Natural killer cell (primary cell): ENCODE measurements at regions of chr2 and their contacts with region 1.

Region 1: GRCh38 chr2:157497638-157498314 is 53.9 kb upstream of the CYTIP start:
- DNase-seq: peak in 1 of 2 donors; percentile 67
- ATAC-seq: peak; percentile 84 to 88 (median 87)
- H3K4me3 ChIP-seq: no peak overlapping the region
- H3K4me3 Mint-ChIP-seq: no peak overlapping the region
- H3K27ac ChIP-seq: no peak overlapping the region
- H3K27ac Mint-ChIP-seq: no peak overlapping the region
- H3K4me1 ChIP-seq: no peaks in the 10 kb centered on the region
- H3K4me1 Mint-ChIP-seq: peaks cover 11 to 23% of the 10 kb centered on the region in 2 donors
- H3K27me3 ChIP-seq: no peaks in the 10 kb centered on the region
- H3K27me3 Mint-ChIP-seq: no peaks in the 10 kb centered on the region
- CTCF ChIP-seq: peak; percentile 68

Region 2: GRCh38 chr2:157460384-157460837 is 37.4 kb before region 1 on chr2:
- intact Hi-C with region 1: no loop called
- DNase-seq: no peak
- ATAC-seq: no peak
- H3K4me3 ChIP-seq: no peak overlapping the region
- H3K4me3 Mint-ChIP-seq: no peak overlapping the region
- H3K27ac ChIP-seq: no peak overlapping the region
- H3K27ac Mint-ChIP-seq: no peak overlapping the region
- H3K4me1 ChIP-seq: peaks cover 17% of the 10 kb centered on the region
- H3K4me1 Mint-ChIP-seq: peaks cover 7% of the 10 kb centered on the region in 2 donors
- H3K27me3 ChIP-seq: no peaks in the 10 kb centered on the region
- H3K27me3 Mint-ChIP-seq: peaks cover 2 to 3% of the 10 kb centered on the region in 2 donors
- CTCF ChIP-seq: no peak

Region 3: GRCh38 chr2:157596992-157597681 is 99.4 kb after region 1 on chr2:
- intact Hi-C with region 1: loop called (anchors 1 kb)
- DNase-seq: peak; percentile 27 to 70
- ATAC-seq: peak; percentile 64 to 78 (median 72)
- H3K4me3 ChIP-seq: no peak overlapping the region
- H3K4me3 Mint-ChIP-seq: peak overlapping the region; percentile 13
- H3K27ac ChIP-seq: no peak overlapping the region
- H3K27ac Mint-ChIP-seq: no peak overlapping the region
- H3K4me1 ChIP-seq: peaks cover 5% of the 10 kb centered on the region
- H3K4me1 Mint-ChIP-seq: peaks cover 0 to 5% of the 10 kb centered on the region in 2 donors
- H3K27me3 ChIP-seq: peaks cover 12% of the 10 kb centered on the region
- H3K27me3 Mint-ChIP-seq: peaks cover 35 to 51% of the 10 kb centered on the region in 2 donors
- CTCF ChIP-seq: peak; percentile 58

Region 4: GRCh38 chr2:157628477-157629415 is 131.0 kb after region 1 on chr2 and contains the start of gene ACVR1C:
- intact Hi-C with region 1: no loop called
- DNase-seq: peak; percentile 54 to 84
- ATAC-seq: peak; percentile 87
- H3K4me3 ChIP-seq: peak within 1 kb of the TSS; percentile 58
- H3K4me3 Mint-ChIP-seq: peak within 1 kb of the TSS; percentile 86
- H3K27ac ChIP-seq: no peak within 1 kb of the TSS
- H3K27ac Mint-ChIP-seq: no peak within 1 kb of the TSS
- H3K4me1 ChIP-seq: peaks cover 14% of the 10 kb centered on the region
- H3K4me1 Mint-ChIP-seq: peaks cover 10 to 21% of the 10 kb centered on the region in 2 donors
- H3K27me3 ChIP-seq: peaks cover 13% of the 10 kb centered on the region
- H3K27me3 Mint-ChIP-seq: peaks cover 7 to 12% of the 10 kb centered on the region in 2 donors
- CTCF ChIP-seq: peak; percentile 32
- total RNA-seq, gene ACVR1C: 0.05 to 0.45 (median 0.19) TPM

Region 5: GRCh38 chr2:158006961-158007719 is 509.4 kb after region 1 on chr2:
- intact Hi-C with region 1: loop called (anchors 1 kb)
- DNase-seq: peak in 1 of 2 donors; percentile 30
- ATAC-seq: no peak
- H3K4me3 ChIP-seq: no peak overlapping the region
- H3K4me3 Mint-ChIP-seq: no peak overlapping the region
- H3K27ac ChIP-seq: no peak overlapping the region
- H3K27ac Mint-ChIP-seq: no peak overlapping the region
- H3K4me1 ChIP-seq: no peaks in the 10 kb centered on the region
- H3K4me1 Mint-ChIP-seq: no peaks in the 10 kb centered on the region
- H3K27me3 ChIP-seq: peaks cover 3% of the 10 kb centered on the region
- H3K27me3 Mint-ChIP-seq: peaks cover 19 to 53% of the 10 kb centered on the region in 2 donors
- CTCF ChIP-seq: no peak

Region 6: DNA sequence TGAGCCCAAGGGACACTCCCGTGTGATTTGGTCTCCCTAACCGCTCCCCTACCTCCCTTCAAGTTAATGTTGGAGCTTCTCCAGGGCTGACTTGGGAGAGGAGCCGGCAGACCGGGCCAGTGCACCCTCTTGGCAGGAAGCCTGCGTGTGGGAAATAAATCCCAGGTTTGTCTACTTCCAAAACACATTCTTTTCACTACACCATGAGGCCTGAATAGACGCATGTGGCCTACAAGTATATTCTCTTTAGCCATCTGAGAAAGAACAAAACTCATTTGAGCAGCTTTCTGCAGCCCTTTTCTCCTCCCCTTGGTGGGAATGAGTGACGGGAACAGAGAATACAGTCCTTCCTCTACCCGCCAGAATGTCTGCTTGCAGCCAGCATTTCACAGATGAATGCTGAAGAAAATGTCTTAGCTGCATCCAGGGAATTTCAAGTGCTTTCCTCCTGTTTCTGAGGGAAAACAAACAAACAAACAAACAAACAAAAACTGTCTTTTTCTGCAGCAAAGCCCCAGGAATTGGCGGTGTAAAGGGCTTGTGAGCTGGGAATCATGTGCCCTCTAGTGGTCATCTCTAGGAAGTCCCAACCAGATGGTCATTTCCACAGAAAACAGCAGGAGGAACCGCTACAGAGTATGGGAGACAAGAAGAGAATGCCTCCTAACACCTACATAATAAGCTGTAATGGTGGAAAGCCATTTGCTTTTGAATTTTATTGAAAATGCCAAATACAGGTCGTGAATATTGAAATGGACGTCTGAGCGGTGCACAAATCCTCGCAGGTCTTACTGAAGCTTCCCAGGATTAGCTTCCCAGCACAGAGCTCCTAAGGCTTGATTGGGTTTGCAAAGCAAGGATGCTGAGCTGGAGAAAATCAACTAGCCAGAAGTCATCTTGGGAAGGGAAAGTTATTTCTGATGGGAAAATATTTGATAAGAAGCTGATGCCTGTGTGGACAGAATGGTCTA is 1256.2 kb after region 1 on chr2:
- intact Hi-C with region 1: loop called (anchors 1 kb)
- DNase-seq: peak in 1 of 2 donors; percentile 67
- ATAC-seq: peak; percentile 64 to 84 (median 76)
- H3K4me3 ChIP-seq: no peak overlapping the region
- H3K4me3 Mint-ChIP-seq: no peak overlapping the region
- H3K27ac ChIP-seq: no peak overlapping the region
- H3K27ac Mint-ChIP-seq: no peak overlapping the region
- H3K4me1 ChIP-seq: no peaks in the 10 kb centered on the region
- H3K4me1 Mint-ChIP-seq: no peaks in the 10 kb centered on the region
- H3K27me3 ChIP-seq: no peaks in the 10 kb centered on the region
- H3K27me3 Mint-ChIP-seq: peaks cover 8 to 16% of the 10 kb centered on the region in 2 donors
- CTCF ChIP-seq: peak; percentile 92